ENCODE measurements at regions of chr13 and their contacts with region 1.

Region 1: GRCh38 chr13:48749699-48750473 is 96.2 kb downstream of the CYSLTR2 start:
- DNase-seq: peak; percentile 89
- H3K4me3 ChIP-seq: no peak overlapping the region
- CTCF ChIP-seq: peak; percentile 71

Region 2: GRCh38 chr13:48709213-48709612 is 40.7 kb before region 1 on chr13:
- in situ Hi-C with region 1: loop called (anchors 5 kb)
- DNase-seq: no peak
- H3K4me3 ChIP-seq: no peak overlapping the region
- CTCF ChIP-seq: no peak